Activated CD4-positive, alpha-beta memory T cell treated with anti-CD3 and anti-CD28 coated beads for 36 hours (primary cell): ENCODE measurements at regions of chr2 and their contacts with region 1.

Region 1: GRCh38 chr2:68766376-68766845 is 31.8 kb downstream of the ARHGAP25 start:
- DNase-seq: peak; percentile 81
- H3K4me3 Mint-ChIP-seq: peak overlapping the region; percentile 76
- H3K27ac Mint-ChIP-seq: peak overlapping the region; percentile 98
- H3K4me1 Mint-ChIP-seq: peaks cover 96% of the 10 kb centered on the region
- H3K27me3 Mint-ChIP-seq: no peaks in the 10 kb centered on the region

Region 2: DNA sequence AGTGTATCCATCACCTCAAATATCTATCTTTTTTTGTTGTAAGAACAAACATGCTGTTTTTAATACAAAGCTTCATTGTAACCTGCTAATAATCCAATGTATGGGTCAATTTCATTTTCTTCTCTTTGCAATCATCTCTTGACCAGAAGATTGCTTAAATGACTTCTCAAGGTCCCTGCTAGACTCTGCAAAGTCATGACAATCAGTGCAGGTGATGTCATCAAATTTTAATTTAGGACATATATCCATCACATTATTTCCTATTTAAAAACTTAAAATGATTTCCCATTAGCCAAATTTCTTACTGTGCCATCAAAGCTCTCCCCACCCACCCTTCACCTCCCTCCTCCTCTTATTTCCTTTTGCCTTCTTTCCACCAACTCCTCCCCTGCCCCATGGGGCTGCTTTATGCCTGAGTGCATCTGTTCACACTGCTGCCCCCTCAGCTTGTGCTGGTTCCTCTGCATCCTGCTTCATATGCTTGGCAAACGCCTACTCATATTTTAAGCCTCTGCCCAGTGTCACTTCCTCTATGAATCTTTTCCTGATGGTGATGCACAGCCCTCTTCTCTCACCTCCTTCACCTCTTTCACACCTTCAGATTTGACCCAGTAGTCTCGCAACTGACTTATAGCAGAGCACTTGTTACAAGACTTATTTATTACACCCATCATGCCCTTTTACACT is 381.0 kb before region 1 on chr2:
- CTCF ChIA-PET with region 1: no interaction called
- POLR2A ChIA-PET with region 1: no interaction called
- intact Hi-C with region 1: loop called (anchors 5 kb)
- DNase-seq: peak; percentile 62
- H3K4me3 Mint-ChIP-seq: no peak overlapping the region
- H3K27ac Mint-ChIP-seq: no peak overlapping the region
- H3K4me1 Mint-ChIP-seq: peaks cover 41% of the 10 kb centered on the region
- H3K27me3 Mint-ChIP-seq: no peaks in the 10 kb centered on the region

Region 3: DNA sequence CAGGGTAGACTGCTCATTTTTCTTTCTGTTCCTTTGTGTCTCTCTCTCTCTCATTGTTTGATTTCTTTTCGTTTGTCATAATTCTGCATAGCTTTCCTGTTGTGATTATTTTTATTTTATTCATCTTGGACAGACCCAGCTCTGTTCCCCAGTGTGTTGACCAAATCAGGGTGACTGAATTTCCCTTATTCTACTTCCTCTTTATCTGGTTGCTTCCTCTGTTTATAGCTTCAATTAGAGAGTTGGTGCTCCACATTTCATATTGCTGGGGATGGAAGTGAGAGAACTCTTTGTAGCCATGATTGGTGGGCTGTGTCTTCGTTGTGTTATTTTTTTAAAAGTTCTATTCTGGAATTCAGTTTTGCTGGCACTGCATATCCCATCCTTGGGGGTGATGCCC is 103.9 kb before region 1 on chr2:
- CTCF ChIA-PET with region 1: no interaction called
- POLR2A ChIA-PET with region 1: no interaction called
- intact Hi-C with region 1: no loop called
- DNase-seq: no peak
- H3K4me3 Mint-ChIP-seq: no peak overlapping the region
- H3K27ac Mint-ChIP-seq: no peak overlapping the region
- H3K4me1 Mint-ChIP-seq: peaks cover 4% of the 10 kb centered on the region
- H3K27me3 Mint-ChIP-seq: peaks cover 24% of the 10 kb centered on the region

Region 4: DNA sequence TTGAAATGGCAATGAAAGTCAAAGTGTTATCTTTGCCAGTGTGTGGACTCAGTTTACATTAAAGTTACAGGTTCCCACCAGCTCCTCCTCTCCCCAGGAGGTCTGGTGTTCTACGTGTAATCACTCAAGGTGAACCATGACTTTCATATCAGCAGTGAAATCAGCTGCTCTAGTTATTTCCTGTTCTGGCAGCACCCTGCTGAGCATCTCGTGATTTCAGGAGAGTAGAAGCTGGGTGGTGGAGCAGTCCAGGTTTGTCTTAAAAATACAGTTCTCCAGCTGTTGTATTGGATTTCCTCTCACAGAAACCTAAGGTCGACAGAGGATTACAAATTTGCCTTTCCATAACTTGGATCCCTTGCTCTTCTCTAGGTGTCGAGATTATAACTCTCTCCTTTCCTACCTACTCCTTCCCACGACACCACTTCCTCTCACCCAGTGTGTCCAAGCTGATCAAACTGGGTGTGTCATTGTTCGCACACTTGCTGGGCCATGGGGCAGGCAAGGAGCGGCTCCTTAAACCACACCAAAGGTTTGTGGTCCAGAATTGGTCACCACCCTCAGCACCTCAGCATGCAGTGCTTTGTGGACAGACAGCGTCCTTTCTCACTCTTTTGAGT is 44.8 kb before region 1 on chr2:
- CTCF ChIA-PET with region 1: interaction called, 6 read pairs
- POLR2A ChIA-PET with region 1: interaction called, 7 read pairs
- intact Hi-C with region 1: loop called (anchors 1 kb)
- DNase-seq: peak; percentile 62
- H3K4me3 Mint-ChIP-seq: peak overlapping the region; percentile 61
- H3K27ac Mint-ChIP-seq: peak overlapping the region; percentile 85
- H3K4me1 Mint-ChIP-seq: peaks cover 90% of the 10 kb centered on the region
- H3K27me3 Mint-ChIP-seq: no peaks in the 10 kb centered on the region

Region 5: DNA sequence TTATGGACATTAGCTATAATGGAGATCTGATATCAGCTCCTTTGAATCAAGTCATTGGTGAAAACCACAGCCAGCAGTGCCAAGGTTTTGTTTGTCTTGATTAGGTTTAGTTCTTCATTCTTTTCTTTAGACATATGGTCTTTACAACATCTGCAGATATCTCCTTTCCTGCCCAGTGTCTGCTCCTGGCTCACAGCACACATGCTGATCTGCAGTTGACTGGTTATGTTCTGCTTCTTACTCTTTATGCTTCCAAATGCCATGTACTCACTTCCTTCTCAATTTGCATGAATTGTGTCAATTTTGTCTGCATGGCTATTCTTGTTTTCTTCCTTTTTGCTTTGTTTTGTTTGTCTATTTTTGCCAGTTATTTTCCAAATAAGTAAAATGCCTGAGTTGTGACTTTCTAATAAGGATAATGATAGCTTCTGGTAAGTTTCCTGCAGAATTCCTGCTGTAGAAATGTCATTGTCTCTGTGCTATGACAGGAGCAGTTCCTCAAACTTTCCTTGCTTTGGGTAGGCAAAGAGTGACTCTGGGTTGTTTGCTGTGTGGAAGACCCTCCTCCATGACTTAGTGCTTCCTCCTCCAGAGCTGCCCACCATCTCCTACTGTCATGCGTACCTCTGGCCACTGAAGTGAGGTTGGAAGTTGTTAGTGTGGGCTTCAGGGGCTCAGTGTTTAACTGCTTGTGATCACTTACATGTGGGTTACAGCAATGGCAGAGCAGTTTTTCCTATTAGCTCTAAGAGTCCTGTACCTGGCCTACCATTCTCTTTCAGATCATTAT is 23.6 kb before region 1 on chr2:
- CTCF ChIA-PET with region 1: interaction called, 161 read pairs
- POLR2A ChIA-PET with region 1: interaction called, 47 read pairs
- intact Hi-C with region 1: loop called (anchors 1 kb)
- DNase-seq: no peak
- H3K4me3 Mint-ChIP-seq: peak overlapping the region; percentile 40
- H3K27ac Mint-ChIP-seq: peak overlapping the region; percentile 75
- H3K4me1 Mint-ChIP-seq: peaks cover 90% of the 10 kb centered on the region
- H3K27me3 Mint-ChIP-seq: no peaks in the 10 kb centered on the region

Region 6: GRCh38 chr2:68796294-68796905 is 30.0 kb after region 1 on chr2:
- CTCF ChIA-PET with region 1: interaction called, 4 read pairs
- POLR2A ChIA-PET with region 1: interaction called, 4 read pairs
- intact Hi-C with region 1: loop called (anchors 1 kb)
- DNase-seq: peak; percentile 40
- H3K4me3 Mint-ChIP-seq: peak overlapping the region; percentile 32
- H3K27ac Mint-ChIP-seq: peak overlapping the region; percentile 90
- H3K4me1 Mint-ChIP-seq: peaks cover 80% of the 10 kb centered on the region
- H3K27me3 Mint-ChIP-seq: no peaks in the 10 kb centered on the region

Region 7: GRCh38 chr2:68837164-68837860 is 70.9 kb after region 1 on chr2:
- CTCF ChIA-PET with region 1: interaction called, 6 read pairs
- POLR2A ChIA-PET with region 1: interaction called, 4 read pairs
- intact Hi-C with region 1: loop called (anchors 1 kb)
- DNase-seq: peak; percentile 77
- H3K4me3 Mint-ChIP-seq: no peak overlapping the region
- H3K27ac Mint-ChIP-seq: peak overlapping the region; percentile 63
- H3K4me1 Mint-ChIP-seq: peaks cover 47% of the 10 kb centered on the region
- H3K27me3 Mint-ChIP-seq: no peaks in the 10 kb centered on the region

Region 8: DNA sequence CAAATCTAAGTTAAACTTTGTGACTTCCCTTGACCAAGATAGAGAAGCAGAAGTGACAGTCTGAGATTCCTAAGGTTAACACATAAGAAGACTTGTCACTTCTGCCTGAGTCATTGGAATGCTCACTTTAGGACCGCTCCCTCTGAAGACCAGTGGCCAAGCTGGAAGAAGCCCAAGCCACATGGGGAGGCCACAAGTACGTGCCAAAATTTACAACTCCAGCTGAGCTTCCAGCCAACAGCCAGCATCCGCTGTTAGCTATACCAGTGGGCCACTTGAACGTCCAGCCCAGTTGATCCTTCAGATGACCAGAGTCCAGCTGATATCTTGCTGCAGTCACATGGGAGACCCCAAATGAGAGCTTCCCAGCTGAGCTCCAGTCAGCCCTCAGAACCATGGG is 228.5 kb after region 1 on chr2:
- CTCF ChIA-PET with region 1: no interaction called
- POLR2A ChIA-PET with region 1: no interaction called
- intact Hi-C with region 1: no loop called
- DNase-seq: no peak
- H3K4me3 Mint-ChIP-seq: no peak overlapping the region
- H3K27ac Mint-ChIP-seq: no peak overlapping the region
- H3K4me1 Mint-ChIP-seq: no peaks in the 10 kb centered on the region
- H3K27me3 Mint-ChIP-seq: peaks cover 10% of the 10 kb centered on the region